Ascending aorta (tissue), 2 donors: ENCODE measurements at regions of chr1 and their contacts with region 1.

Region 1: DNA sequence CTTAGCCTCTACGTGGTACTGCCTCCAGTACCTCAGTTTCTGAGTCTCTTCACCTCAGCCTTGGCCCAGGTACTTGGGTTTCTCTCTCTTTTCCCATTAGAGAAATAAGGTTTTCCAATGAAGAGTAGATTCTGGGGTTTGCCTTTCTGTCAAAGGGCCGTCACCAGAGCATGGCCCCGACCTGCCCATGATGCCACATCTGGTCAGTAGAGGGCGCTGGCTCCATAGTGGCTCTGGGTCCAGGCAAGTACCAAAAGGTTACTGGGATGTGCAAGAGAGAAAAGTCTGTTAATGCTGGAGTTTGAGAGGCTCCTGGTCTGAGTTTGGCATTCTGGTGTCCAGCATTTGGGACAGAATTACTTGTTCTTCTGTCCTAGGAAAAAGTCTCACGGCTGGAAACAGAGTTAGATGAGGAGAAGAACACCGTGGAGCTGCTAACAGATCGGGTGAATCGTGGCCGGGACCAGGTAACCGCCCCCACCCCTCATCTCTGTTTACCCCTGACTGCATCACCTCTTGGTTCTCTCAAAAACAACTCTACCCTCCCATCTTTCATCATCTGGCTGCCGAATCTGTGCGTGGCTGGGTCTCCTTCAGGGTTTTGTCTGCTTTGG is 5.3 kb upstream of the TUFT1 start:
- DNase-seq: peak in 1 of 2 donors; percentile 85
- H3K4me3 ChIP-seq: no peak overlapping the region
- H3K27ac ChIP-seq: no peak overlapping the region
- H3K4me1 ChIP-seq: peaks cover 3 to 4% of the 10 kb centered on the region in 2 donors
- H3K27me3 ChIP-seq: no peaks in the 10 kb centered on the region
- CTCF ChIP-seq: peak; percentile 70 to 90 (median 88)

Region 2: GRCh38 chr1:151443846-151444782 is 90.7 kb before region 1 on chr1:
- intact Hi-C with region 1: loop called (anchors 5 kb)
- DNase-seq: peak in 1 of 2 donors; percentile 78
- H3K4me3 ChIP-seq: peak overlapping the region in 1 of 2 donors; percentile 9
- H3K27ac ChIP-seq: no peak overlapping the region
- H3K4me1 ChIP-seq: peaks cover 0 to 27% of the 10 kb centered on the region in 2 donors
- H3K27me3 ChIP-seq: no peaks in the 10 kb centered on the region
- CTCF ChIP-seq: peak; percentile 69 to 72 (median 69)